Breast epithelium (tissue), 4 donors: ENCODE measurements at regions of chr1 and their contacts with region 1.

Region 1: DNA sequence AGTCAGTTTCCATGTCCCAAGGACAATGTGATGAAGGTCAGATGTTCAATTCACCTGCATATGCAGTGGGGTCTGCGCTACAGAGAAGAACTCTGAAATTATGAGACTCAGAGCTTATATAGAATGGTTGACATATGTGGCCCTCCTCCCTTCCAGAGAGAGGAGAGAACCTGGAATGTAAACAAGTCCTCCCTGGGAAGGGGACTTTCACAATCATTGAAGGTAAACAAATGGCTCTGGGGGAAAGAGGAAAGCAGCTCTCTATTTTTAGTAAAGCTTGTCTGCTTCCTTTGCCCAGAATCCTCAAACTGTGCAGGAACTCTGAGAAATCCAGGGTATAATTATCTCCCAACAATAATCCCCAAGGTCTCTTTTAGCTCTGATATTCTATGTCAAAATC is 9.8 kb downstream of the OVGP1 start:
- DNase-seq: no peak
- H3K4me3 ChIP-seq: no peak overlapping the region
- H3K27ac ChIP-seq: no peak overlapping the region
- H3K4me1 ChIP-seq: no peaks in the 10 kb centered on the region
- H3K27me3 ChIP-seq: no peaks in the 10 kb centered on the region
- CTCF ChIP-seq: no peak
- POLR2A ChIP-seq: no peak

Region 2: DNA sequence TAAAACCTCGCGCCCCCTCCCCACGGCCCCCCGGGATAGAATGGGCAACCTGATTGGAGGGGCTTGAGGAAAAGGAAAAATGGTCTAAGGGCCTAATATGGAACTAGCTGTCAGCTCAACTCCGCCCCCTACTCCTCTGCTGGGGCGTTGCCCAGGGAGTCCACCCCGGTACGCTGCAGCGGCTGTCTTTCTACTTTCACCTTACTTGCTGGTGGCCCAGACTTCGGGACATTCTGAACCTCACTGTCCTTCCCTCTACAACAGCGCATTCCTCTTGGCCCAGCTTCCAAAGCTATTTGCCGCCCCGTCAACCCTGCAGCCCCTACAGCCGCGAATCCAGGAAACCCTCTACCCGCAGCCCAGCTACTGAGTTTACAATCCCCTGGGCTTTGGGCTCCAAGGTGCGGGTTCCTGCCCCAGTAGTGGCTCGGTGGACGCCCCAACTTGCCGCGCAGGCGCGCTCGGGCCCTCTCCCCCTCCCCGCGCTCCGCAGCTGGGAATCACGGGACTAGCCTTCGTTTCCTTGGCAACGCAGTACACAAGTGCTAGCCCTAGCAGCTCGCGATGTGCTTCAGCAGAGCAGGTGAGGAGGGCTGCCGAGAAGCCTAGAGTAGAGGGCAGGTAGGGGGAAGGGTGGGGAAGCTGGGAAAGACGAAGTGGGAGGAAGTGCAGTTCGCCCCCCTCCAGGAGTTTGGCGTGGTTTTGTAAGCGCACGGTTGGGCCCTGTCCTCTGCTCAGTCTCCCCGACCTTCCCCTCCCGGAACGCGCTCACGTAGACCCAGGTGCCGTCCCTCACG is 71.5 kb before region 1 on chr1:
- intact Hi-C with region 1: no loop called
- DNase-seq: peak; percentile 84 to 87
- H3K4me3 ChIP-seq: peak overlapping the region; percentile 53 to 77 (median 62)
- H3K27ac ChIP-seq: peak overlapping the region; percentile 88 to 94
- H3K4me1 ChIP-seq: peaks cover 0 to 3% of the 10 kb centered on the region in 2 donors
- H3K27me3 ChIP-seq: no peaks in the 10 kb centered on the region
- CTCF ChIP-seq: peak in 1 of 3 donors; percentile 7
- POLR2A ChIP-seq: peak; percentile 48

Region 3: GRCh38 chr1:111366256-111366655 is 51.5 kb before region 1 on chr1:
- intact Hi-C with region 1: no loop called
- DNase-seq: no peak
- H3K4me3 ChIP-seq: no peak overlapping the region
- H3K27ac ChIP-seq: no peak overlapping the region
- H3K4me1 ChIP-seq: no peaks in the 10 kb centered on the region
- H3K27me3 ChIP-seq: peaks cover 0 to 4% of the 10 kb centered on the region in 2 donors
- CTCF ChIP-seq: no peak
- POLR2A ChIP-seq: no peak

Region 4: DNA sequence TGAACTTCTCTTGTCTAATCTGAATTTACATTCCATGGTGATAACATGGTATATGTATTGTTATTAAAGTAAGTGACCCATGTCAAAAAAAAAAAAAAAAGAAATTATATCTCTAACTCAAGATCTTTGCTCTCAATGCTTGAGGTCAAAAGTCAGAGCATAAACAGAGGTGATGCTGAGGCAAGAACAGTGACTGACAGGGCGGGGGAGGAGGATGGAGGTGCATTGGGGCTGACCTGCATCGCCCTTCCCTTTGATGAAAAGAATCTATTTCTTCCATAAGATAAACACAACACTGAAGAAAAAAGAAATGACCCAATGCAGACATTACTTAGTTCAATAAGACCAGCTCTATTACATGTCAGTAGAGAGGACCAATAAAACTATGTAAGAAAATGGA is 36.3 kb before region 1 on chr1:
- intact Hi-C with region 1: loop called (anchors 2 kb)
- DNase-seq: no peak
- H3K4me3 ChIP-seq: no peak overlapping the region
- H3K27ac ChIP-seq: no peak overlapping the region
- H3K4me1 ChIP-seq: no peaks in the 10 kb centered on the region
- H3K27me3 ChIP-seq: no peaks in the 10 kb centered on the region
- CTCF ChIP-seq: no peak
- POLR2A ChIP-seq: no peak

Region 5: DNA sequence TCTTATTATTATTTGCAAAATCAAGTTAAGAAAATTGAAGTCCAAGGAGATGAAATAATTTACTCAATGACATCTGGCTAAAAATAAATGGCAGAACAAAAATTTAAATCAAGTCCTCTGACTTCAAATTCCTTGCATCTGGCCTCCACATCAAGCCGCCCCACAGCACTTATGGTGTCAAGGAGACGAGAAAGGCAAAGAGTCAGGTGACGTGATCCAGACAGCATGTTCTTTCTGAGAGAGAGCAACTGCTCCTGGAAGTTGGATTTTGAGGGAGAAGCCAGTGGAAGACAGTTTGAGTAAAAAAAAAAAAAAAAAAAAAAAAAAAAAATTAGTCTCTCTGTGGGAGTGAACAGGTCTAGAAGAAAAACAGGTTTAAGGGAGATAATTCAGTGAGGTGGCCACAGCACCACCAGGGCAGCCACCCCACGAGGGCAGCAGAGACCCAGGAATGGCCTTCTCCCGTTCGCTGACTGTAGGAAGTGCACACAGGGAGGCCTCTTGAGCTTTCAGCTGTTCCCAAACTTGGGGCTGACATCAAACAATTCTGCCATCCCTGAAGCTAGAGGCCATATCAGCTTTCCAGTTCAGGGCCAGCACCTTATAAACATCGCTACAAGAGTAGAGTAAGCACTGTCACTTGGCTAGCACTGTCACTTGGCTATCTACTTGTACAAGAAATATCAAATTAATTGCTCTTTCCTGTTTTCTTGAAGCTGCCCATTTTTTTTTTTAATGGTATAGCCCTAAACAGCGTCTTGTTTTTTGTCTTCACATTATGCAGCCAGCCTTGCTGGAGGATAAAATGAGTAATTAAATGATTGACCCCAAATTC is 63.8 kb after region 1 on chr1:
- intact Hi-C with region 1: no loop called
- DNase-seq: peak in 1 of 2 donors; percentile 50
- H3K4me3 ChIP-seq: no peak overlapping the region
- H3K27ac ChIP-seq: no peak overlapping the region
- H3K4me1 ChIP-seq: no peaks in the 10 kb centered on the region
- H3K27me3 ChIP-seq: no peaks in the 10 kb centered on the region
- CTCF ChIP-seq: peak in 2 of 3 donors; percentile 38 to 40
- POLR2A ChIP-seq: no peak